Thyroid gland (tissue), 4 donors: ENCODE measurements at regions of chr3 and their contacts with region 1.

Region 1: GRCh38 chr3:182258538-182259177 is 534.6 kb upstream of the ATP11B start:
- DNase-seq: no peak
- H3K4me3 ChIP-seq: no peak overlapping the region
- H3K27ac ChIP-seq: no peak overlapping the region
- H3K4me1 ChIP-seq: no peaks in the 10 kb centered on the region
- H3K27me3 ChIP-seq: peaks cover 4% of the 10 kb centered on the region
- CTCF ChIP-seq: peak in 4 of 6 experiments; percentile 26 to 76 (median 72)
- POLR2A ChIP-seq: no peak

Region 2: GRCh38 chr3:181726351-181727330 is 532.0 kb before region 1 on chr3:
- intact Hi-C with region 1: loop called (anchors 10 kb)
- DNase-seq: no peak
- H3K4me3 ChIP-seq: peak overlapping the region in 1 of 3 donors; percentile 1
- H3K27ac ChIP-seq: no peak overlapping the region
- H3K4me1 ChIP-seq: peaks cover 11 to 19% of the 10 kb centered on the region in 2 donors
- H3K27me3 ChIP-seq: peaks cover 56% of the 10 kb centered on the region
- CTCF ChIP-seq: no peak
- POLR2A ChIP-seq: no peak